Activated T-helper 2 cell treated with anti-CD3 and anti-CD28 coated beads, Interferon-gamma antibody, Interleukin-2, Interleukin-4, amounts not matched to agents 10 μg/mL and 5 μg/mL and 100 μg/mL, durations not matched to agents 14 hours and 24 hours and 36 hours (primary cell): ENCODE measurements at regions of chr18 and their contacts with region 1.

Region 1: DNA sequence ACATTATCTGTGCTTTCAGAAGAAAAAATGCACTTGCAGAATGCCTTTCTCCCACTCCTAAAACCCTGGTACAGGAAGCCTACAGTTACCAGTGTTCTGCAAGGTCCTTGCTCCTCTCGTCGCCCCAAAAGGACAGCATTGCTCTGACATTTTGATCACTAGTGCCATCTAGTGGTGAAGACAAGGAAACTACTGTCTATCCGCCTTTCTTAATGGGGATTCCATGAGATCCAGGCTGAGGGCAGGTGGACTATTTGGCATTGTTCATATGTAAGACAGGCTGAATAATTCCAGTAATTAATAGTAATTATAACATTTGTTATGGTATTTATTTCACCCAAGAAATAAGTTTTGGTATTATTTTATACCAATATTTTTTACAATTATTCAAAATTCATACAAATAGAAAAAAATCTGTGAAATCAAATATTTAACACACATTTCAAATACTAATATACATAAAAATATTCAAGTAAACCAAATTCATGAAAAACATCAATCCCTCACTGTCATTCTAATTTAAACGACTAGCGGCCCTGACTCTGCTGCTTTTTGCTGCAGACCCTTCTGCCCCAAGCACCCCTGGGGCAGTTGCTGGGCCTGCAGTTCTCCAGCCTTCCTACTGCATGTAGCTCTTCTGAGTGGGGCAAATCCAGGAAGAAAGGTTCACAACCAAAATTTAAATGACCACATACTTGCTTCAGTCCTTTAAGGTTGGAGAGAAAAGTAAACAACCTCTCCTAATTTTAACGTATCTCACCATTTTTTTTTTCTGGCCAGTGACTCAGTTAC is 19.0 kb downstream of the TPGS2 start:
- DNase-seq: peak; percentile 10
- H3K4me3 Mint-ChIP-seq: no peak overlapping the region
- H3K27ac Mint-ChIP-seq: no peak overlapping the region
- H3K4me1 Mint-ChIP-seq: peaks cover 4% of the 10 kb centered on the region
- H3K27me3 Mint-ChIP-seq: no peaks in the 10 kb centered on the region

Region 2: DNA sequence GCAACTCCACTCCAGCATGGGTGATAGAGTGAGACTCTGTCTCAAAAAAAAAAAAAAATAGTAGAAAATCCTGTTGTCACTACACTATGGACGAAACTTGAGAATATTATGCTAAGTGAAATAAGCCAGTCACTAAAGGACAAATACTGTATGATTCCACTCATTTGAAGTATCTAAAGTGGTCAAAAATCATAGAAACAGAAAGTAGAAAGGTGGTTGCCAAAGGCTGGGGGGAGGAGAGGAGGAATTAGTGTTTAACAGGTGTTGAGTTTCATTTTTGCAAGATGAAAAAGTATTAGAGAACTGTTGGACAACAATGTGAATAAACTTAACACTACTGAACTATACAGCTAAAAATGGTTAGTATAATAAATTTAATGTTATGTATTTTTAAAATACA is 856.1 kb before region 1 on chr18:
- intact Hi-C with region 1: no loop called
- DNase-seq: no peak
- H3K4me3 Mint-ChIP-seq: no peak overlapping the region
- H3K27ac Mint-ChIP-seq: no peak overlapping the region
- H3K4me1 Mint-ChIP-seq: peaks cover 3% of the 10 kb centered on the region
- H3K27me3 Mint-ChIP-seq: peaks cover 24% of the 10 kb centered on the region

Region 3: DNA sequence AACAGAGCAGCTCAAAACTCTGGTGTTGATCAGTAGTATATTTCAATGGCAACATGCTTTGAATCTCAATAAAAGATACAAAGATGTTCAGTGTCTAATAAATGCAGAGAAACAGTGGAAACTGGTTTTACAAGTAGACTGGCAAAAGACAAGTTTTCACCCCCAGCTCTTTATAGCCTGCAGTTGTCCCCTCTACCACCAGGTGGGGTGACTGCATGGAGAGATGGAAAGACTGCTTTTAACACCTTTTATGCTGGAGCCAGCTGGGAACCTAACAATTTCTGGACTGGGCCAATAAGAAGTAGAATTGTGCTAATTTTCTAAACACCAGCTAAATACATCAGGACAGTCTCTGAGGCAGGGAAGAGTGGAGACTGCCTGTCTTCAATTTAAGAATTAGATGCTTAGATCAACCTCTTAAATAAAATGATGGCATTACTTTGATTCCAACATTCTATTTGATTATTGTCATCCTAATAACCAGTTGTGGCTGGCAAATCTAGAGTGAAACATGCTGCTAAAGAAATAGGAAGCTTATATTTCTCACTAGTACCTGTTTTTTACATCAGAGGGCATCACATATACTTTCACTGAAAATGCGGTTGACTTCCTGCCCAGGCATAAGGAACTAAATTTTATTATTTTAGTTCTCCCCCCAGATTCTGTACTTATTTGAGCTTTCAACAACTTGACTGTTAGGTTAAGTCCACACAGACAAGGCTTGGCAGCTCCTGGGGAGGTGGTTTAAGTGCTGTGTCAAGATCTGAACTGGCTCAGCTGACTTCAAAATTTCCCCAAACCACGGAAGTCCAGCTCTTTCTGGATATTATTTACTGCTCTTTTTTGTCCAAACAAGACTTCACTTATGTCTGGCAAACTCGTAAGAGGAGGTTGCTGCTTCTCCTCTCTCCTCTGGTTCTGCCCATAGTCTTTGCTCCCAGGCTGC is 121.5 kb before region 1 on chr18:
- intact Hi-C with region 1: loop called (anchors 1 kb)
- DNase-seq: peak; percentile 27
- H3K4me3 Mint-ChIP-seq: no peak overlapping the region
- H3K27ac Mint-ChIP-seq: no peak overlapping the region
- H3K4me1 Mint-ChIP-seq: no peaks in the 10 kb centered on the region
- H3K27me3 Mint-ChIP-seq: peaks cover 2% of the 10 kb centered on the region

Region 4: GRCh38 chr18:36769611-36770314 is 40.0 kb before region 1 on chr18:
- intact Hi-C with region 1: loop called (anchors 5 kb)
- DNase-seq: no peak
- H3K4me3 Mint-ChIP-seq: no peak overlapping the region
- H3K27ac Mint-ChIP-seq: no peak overlapping the region
- H3K4me1 Mint-ChIP-seq: peaks cover 22% of the 10 kb centered on the region
- H3K27me3 Mint-ChIP-seq: no peaks in the 10 kb centered on the region

Region 5: GRCh38 chr18:37160038-37160820 is 350.4 kb after region 1 on chr18:
- intact Hi-C with region 1: no loop called
- DNase-seq: no peak
- H3K4me3 Mint-ChIP-seq: no peak overlapping the region
- H3K27ac Mint-ChIP-seq: no peak overlapping the region
- H3K4me1 Mint-ChIP-seq: peaks cover 2% of the 10 kb centered on the region
- H3K27me3 Mint-ChIP-seq: no peaks in the 10 kb centered on the region